ENCODE measurements at regions of chr2 and their contacts with region 1.

Region 1: GRCh38 chr2:10832203-10832936 is 19.8 kb upstream of the PDIA6 start:
- DNase-seq: peak; percentile 78 to 91
- ATAC-seq: peak; percentile 90 to 95 (median 94)
- H3K4me3 ChIP-seq: no peak overlapping the region
- H3K4me3 Mint-ChIP-seq: peak overlapping the region; percentile 13
- H3K27ac ChIP-seq: no peak overlapping the region
- H3K27ac Mint-ChIP-seq: no peak overlapping the region
- H3K4me1 ChIP-seq: peaks cover 14% of the 10 kb centered on the region
- H3K4me1 Mint-ChIP-seq: peaks cover 5 to 9% of the 10 kb centered on the region in 2 donors
- H3K27me3 ChIP-seq: peaks cover 7% of the 10 kb centered on the region
- H3K27me3 Mint-ChIP-seq: peaks cover 22 to 37% of the 10 kb centered on the region in 2 donors
- CTCF ChIP-seq: peak; percentile 97

Region 2: DNA sequence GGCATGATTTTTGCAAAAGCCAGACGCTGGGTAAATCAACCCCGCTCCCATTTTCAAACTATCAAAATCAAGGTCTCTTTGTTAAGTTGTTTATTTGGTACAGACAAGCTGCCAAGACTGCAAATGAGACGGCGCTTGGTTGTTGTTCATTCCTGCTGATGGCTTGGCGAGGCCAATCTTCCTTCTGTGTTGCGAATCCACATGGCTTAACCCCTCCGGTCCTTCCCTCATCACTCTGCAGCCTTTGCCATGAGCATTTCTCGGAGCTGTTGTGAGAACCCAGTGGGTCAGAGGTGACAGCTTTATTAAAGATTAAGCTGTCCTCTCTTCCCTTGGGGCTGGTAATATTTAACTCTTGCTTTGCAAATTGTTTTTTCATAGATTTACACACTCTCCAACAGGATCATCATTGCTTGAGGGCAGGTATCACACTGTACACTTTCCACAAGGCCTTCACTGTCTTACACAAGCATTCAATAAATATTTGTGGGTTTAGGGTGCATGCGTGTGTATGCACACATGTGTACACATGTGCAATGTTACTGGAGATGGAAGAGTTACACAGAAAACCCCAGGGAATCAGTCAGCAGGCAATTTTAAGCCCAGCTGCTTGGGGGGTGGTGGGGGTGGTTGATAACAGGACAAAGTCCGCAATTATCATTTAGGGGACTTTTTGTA is 51.6 kb after region 1 on chr2:
- intact Hi-C with region 1: loop called (anchors 5 kb)
- DNase-seq: no peak
- ATAC-seq: no peak
- H3K4me3 ChIP-seq: no peak overlapping the region
- H3K4me3 Mint-ChIP-seq: no peak overlapping the region
- H3K27ac ChIP-seq: no peak overlapping the region
- H3K27ac Mint-ChIP-seq: peak overlapping the region in 1 of 2 donors; percentile 76
- H3K4me1 ChIP-seq: no peaks in the 10 kb centered on the region
- H3K4me1 Mint-ChIP-seq: peaks cover 0 to 43% of the 10 kb centered on the region in 2 donors
- H3K27me3 ChIP-seq: no peaks in the 10 kb centered on the region
- H3K27me3 Mint-ChIP-seq: peaks cover 3 to 6% of the 10 kb centered on the region in 2 donors
- CTCF ChIP-seq: no peak

Region 3: DNA sequence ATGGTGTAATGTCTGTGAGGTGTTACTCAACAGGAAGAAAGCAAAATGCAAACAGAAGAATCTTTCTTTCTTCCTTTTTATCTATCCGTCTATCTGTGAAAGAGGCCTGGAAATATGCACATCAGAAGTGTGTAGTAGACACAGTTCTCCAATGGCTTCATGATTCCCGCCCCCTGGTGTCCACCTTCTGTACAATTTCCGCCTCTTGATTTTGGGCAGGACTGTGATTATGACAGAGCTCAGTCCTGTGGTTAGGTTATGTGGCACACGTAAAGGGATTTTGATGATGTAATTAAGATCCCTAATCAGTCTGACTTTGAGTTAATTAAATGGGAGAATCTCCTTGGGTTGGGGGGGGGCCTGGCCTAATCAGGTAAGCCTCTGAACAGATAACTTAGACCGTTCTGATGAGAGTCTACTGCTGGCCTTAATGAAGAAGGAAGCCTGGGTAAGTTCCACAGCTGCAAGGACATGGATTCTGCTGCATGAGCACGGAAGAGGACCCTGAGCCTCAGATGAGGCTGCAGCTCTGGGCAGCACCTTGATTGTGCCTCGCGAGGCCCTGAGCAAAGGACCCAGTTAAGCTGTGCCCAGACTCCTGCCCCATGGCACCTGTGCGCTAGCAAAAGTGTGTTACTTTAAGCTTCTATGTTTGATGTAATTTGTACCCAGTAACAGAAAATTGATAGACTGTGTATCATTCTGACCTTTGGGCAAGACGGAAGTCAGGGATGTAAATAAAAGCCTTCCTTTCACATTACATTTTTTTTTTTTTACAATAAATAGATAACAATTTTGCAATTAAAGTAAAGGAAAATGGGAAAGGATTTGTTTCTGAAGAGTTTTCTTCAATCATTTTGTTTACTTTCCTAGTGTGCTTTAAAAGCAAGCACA is 68.1 kb after region 1 on chr2:
- intact Hi-C with region 1: loop called (anchors 1 kb)
- DNase-seq: peak; percentile 23 to 29
- ATAC-seq: peak in 2 of 3 donors; percentile 46 to 70
- H3K4me3 ChIP-seq: no peak overlapping the region
- H3K4me3 Mint-ChIP-seq: no peak overlapping the region
- H3K27ac ChIP-seq: no peak overlapping the region
- H3K27ac Mint-ChIP-seq: no peak overlapping the region
- H3K4me1 ChIP-seq: no peaks in the 10 kb centered on the region
- H3K4me1 Mint-ChIP-seq: no peaks in the 10 kb centered on the region
- H3K27me3 ChIP-seq: no peaks in the 10 kb centered on the region
- H3K27me3 Mint-ChIP-seq: peaks cover 4 to 20% of the 10 kb centered on the region in 2 donors
- CTCF ChIP-seq: peak; percentile 43

Region 4: DNA sequence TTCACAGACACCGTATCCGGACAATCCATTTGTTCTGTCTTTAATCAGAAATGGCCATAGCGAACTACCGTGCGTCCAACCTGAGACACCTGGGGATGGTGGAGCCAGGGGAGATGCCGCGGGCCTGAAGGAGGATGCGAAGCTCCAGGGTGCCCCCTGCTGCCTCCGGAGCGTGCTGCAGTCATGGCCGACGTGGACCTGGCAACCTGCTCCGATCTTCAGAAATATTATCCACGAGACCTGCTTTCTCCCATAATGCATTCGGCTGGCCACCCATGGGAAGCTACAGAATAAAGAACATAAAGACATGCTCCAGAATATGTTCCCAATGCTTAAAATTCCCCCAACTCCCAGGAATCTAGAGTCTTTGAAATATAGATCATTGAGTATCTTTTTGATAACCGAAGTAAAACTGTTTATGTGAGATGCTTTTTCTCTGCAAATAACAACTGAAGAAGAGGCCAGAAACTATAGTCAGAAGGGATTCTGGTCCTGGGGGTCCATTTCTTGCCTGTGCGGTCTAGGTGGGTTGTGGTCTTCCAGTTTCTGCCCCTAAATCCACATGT is 292.2 kb after region 1 on chr2:
- intact Hi-C with region 1: loop called (anchors 2 kb)
- DNase-seq: peak in 1 of 2 donors; percentile 72
- ATAC-seq: peak in 2 of 3 donors; percentile 55 to 61
- H3K4me3 ChIP-seq: no peak overlapping the region
- H3K4me3 Mint-ChIP-seq: no peak overlapping the region
- H3K27ac ChIP-seq: no peak overlapping the region
- H3K27ac Mint-ChIP-seq: no peak overlapping the region
- H3K4me1 ChIP-seq: peaks cover 2% of the 10 kb centered on the region
- H3K4me1 Mint-ChIP-seq: peaks cover 4 to 9% of the 10 kb centered on the region in 2 donors
- H3K27me3 ChIP-seq: no peaks in the 10 kb centered on the region
- H3K27me3 Mint-ChIP-seq: no peaks in the 10 kb centered on the region
- CTCF ChIP-seq: peak; percentile 29

Region 5: GRCh38 chr2:11446733-11447248 is 614.4 kb after region 1 on chr2:
- intact Hi-C with region 1: loop called (anchors 2 kb)
- DNase-seq: peak in 1 of 2 donors; percentile 78
- ATAC-seq: peak; percentile 54 to 71 (median 68)
- H3K4me3 ChIP-seq: no peak overlapping the region
- H3K4me3 Mint-ChIP-seq: no peak overlapping the region
- H3K27ac ChIP-seq: no peak overlapping the region
- H3K27ac Mint-ChIP-seq: no peak overlapping the region
- H3K4me1 ChIP-seq: no peaks in the 10 kb centered on the region
- H3K4me1 Mint-ChIP-seq: no peaks in the 10 kb centered on the region
- H3K27me3 ChIP-seq: no peaks in the 10 kb centered on the region
- H3K27me3 Mint-ChIP-seq: no peaks in the 10 kb centered on the region
- CTCF ChIP-seq: peak; percentile 69